IMR-90 (cell line): ENCODE measurements at regions of chr6 and their contacts with region 1.

Region 1: GRCh38 chr6:26031595-26032339 is 55.5 kb upstream of the HFE start:
- DNase-seq: peak; percentile 97
- ATAC-seq: peak; percentile 72
- H3K4me3 ChIP-seq: peak overlapping the region; percentile 73
- H3K27ac ChIP-seq: peak overlapping the region; percentile 27
- H3K4me1 ChIP-seq: no peaks in the 10 kb centered on the region
- H3K27me3 ChIP-seq: no peaks in the 10 kb centered on the region
- CTCF ChIP-seq: peak; percentile 15; the same call in 1 of the 2 replicates
- POLR2A ChIP-seq: peak; percentile 98
- RAD21 ChIP-seq: no peak

Region 2: GRCh38 chr6:26017632-26017966 is 14.2 kb before region 1 on chr6:
- CTCF ChIA-PET with region 1: interaction called, 15 read pairs
- POLR2A ChIA-PET with region 1: interaction called, 17 read pairs
- dilution Hi-C with region 1: no loop called
- in situ Hi-C with region 1: no loop called
- intact Hi-C with region 1: no loop called
- DNase-seq: peak; percentile 95
- ATAC-seq: peak; percentile 34
- H3K4me3 ChIP-seq: peak overlapping the region; percentile 44
- H3K27ac ChIP-seq: peak overlapping the region; percentile 78
- H3K4me1 ChIP-seq: peaks cover 12% of the 10 kb centered on the region
- H3K27me3 ChIP-seq: no peaks in the 10 kb centered on the region
- CTCF ChIP-seq: peak; percentile 72
- POLR2A ChIP-seq: peak; percentile 97
- RAD21 ChIP-seq: no peak

Region 3: DNA sequence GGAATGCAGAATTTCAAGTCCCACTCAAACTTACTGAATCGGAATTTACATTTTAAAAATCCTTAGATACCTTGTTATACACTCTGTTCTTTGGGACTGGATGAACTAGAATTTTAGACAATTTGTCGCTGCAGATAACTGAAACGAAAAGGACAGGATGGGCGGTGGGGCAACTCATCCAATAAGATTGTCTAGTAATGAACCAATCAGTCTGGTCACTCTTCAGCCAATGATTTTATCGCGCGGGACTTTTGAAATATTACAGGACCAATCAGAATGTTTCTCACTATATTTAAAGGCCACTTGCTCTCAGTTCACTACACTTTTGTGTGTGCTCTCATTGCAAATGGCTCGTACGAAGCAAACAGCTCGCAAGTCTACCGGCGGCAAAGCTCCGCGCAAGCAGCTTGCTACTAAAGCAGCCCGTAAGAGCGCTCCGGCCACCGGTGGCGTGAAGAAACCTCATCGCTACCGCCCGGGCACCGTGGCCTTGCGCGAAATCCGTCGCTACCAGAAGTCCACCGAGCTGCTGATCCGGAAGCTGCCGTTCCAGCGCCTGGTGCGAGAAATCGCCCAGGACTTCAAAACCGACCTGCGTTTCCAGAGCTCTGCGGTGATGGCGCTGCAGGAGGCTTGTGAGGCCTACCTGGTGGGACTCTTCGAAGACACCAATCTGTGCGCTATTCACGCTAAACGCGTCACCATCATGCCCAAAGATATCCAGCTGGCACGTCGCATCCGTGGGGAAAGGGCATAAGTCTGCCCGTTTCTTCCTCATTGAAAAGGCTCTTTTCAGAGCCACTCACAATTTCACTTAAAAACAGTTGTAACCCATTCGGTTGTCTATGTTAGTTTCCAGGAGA is 13.5 kb after region 1 on chr6:
- CTCF ChIA-PET with region 1: interaction called, 12 read pairs
- POLR2A ChIA-PET with region 1: interaction called, 20 read pairs
- dilution Hi-C with region 1: no loop called
- in situ Hi-C with region 1: no loop called
- intact Hi-C with region 1: loop called (anchors 1 kb)
- DNase-seq: peak; percentile 94
- ATAC-seq: peak; percentile 73
- H3K4me3 ChIP-seq: peak overlapping the region; percentile 63
- H3K27ac ChIP-seq: peak overlapping the region; percentile 51
- H3K4me1 ChIP-seq: no peaks in the 10 kb centered on the region; the same call in 1 of the 2 replicates
- H3K27me3 ChIP-seq: no peaks in the 10 kb centered on the region
- CTCF ChIP-seq: peak; percentile 21; the same call in 1 of the 2 replicates
- POLR2A ChIP-seq: peak; percentile 98
- RAD21 ChIP-seq: no peak

Region 4: DNA sequence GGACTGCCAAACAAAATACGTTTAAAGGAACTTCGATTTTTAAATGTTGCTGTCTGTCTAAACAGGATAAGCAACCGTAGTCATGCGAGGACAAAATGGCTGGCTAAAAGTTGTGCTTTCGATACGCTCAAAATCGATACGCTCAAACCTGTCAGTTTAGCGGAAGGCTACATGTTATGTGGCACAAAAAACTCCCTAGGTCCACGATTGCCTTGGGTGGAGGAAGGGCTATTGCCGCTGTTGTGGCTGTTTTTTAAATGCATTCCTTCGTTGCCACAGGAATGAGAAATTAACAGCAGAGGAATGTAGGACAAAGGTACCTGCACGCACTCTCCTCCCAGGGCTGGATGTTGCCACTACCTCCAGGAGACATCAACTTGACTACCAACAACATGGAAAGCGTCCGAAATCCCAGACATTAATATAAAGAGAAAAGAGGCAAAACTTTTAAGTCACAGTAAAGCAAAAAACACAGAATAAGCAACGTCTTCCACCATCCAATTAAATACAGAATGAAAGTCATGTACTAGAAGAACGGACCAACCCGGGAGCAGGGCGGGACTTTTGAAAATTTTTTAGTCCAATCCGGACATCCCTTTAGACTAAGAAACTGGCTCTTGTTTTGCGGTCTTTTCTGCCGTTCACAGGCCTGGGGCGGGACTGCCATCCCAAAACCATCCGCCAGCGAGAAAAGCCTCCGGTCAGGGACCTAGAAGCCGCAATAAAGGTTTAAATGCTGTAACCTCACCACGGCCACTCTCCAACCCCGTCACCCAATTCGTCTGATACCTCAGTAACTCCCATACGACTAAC is 23.3 kb after region 1 on chr6:
- CTCF ChIA-PET with region 1: no interaction called
- POLR2A ChIA-PET with region 1: no interaction called
- dilution Hi-C with region 1: no loop called
- in situ Hi-C with region 1: no loop called
- intact Hi-C with region 1: loop called (anchors 1 kb)
- DNase-seq: peak; percentile 96
- ATAC-seq: peak; percentile 77
- H3K4me3 ChIP-seq: peak overlapping the region; percentile 77
- H3K27ac ChIP-seq: peak overlapping the region; percentile 86
- H3K4me1 ChIP-seq: peaks cover 2% of the 10 kb centered on the region; the same call in 1 of the 2 replicates
- H3K27me3 ChIP-seq: no peaks in the 10 kb centered on the region
- CTCF ChIP-seq: peak; percentile 28; the same call in 1 of the 2 replicates
- POLR2A ChIP-seq: peak; percentile 92
- RAD21 ChIP-seq: peak; percentile 26; the same call in 1 of the 2 replicates

Region 5: GRCh38 chr6:26103770-26104456 is 72.1 kb after region 1 on chr6:
- CTCF ChIA-PET with region 1: no interaction called
- POLR2A ChIA-PET with region 1: no interaction called
- dilution Hi-C with region 1: no loop called
- in situ Hi-C with region 1: no loop called
- intact Hi-C with region 1: loop called (anchors 2 kb)
- DNase-seq: peak; percentile 95
- ATAC-seq: peak; percentile 83
- H3K4me3 ChIP-seq: peak overlapping the region; percentile 45
- H3K27ac ChIP-seq: peak overlapping the region; percentile 52
- H3K4me1 ChIP-seq: peaks cover 5% of the 10 kb centered on the region; the same call in 1 of the 2 replicates
- H3K27me3 ChIP-seq: no peaks in the 10 kb centered on the region
- CTCF ChIP-seq: peak; percentile 39
- POLR2A ChIP-seq: peak; percentile 99
- RAD21 ChIP-seq: peak; percentile 44

Region 6: GRCh38 chr6:27132532-27133280 is 1100.9 kb after region 1 on chr6:
- CTCF ChIA-PET with region 1: no interaction called
- POLR2A ChIA-PET with region 1: interaction called, 11 read pairs
- dilution Hi-C with region 1: no loop called
- in situ Hi-C with region 1: loop called (anchors 10 kb)
- intact Hi-C with region 1: no loop called
- DNase-seq: peak; percentile 100
- ATAC-seq: peak; percentile 89
- H3K4me3 ChIP-seq: peak overlapping the region; percentile 50
- H3K27ac ChIP-seq: peak overlapping the region; percentile 79
- H3K4me1 ChIP-seq: no peaks in the 10 kb centered on the region
- H3K27me3 ChIP-seq: no peaks in the 10 kb centered on the region
- CTCF ChIP-seq: no peak
- POLR2A ChIP-seq: peak; percentile 99
- RAD21 ChIP-seq: no peak

Region 7: DNA sequence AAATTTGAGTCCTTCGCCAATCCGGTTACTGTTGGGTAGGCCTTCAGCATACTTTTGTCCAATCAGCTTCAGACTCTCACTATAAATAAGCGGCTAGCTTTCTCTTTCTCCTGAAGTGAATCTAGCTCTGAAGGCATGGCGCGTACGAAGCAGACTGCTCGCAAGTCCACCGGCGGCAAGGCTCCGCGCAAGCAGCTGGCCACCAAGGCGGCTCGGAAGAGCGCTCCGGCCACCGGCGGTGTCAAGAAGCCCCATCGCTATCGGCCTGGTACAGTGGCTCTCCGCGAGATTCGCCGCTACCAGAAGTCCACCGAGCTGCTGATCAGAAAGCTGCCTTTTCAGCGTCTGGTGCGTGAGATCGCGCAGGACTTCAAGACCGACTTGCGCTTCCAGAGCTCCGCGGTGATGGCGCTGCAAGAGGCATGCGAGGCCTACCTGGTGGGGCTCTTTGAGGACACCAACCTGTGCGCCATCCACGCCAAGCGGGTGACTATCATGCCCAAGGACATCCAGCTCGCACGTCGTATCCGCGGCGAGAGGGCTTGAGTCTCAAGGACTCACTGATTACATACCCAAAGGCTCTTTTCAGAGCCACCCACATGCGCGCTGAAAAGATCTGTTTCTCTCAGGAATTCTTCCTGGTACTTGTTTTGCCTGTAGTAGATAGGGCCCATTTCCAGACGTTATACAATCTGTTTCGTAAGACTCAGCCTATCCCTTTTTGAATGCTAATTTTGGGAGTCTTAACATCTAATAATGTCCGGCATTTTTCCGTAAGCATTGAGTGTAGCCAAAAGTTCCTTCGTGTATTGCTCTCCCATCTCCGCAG is 1778.4 kb after region 1 on chr6:
- CTCF ChIA-PET with region 1: no interaction called
- POLR2A ChIA-PET with region 1: interaction called, 3 read pairs
- dilution Hi-C with region 1: no loop called
- in situ Hi-C with region 1: loop called (anchors 10 kb)
- intact Hi-C with region 1: no loop called
- DNase-seq: peak; percentile 98
- ATAC-seq: peak; percentile 52
- H3K4me3 ChIP-seq: peak overlapping the region; percentile 58
- H3K27ac ChIP-seq: peak overlapping the region; percentile 87
- H3K4me1 ChIP-seq: peaks cover 3% of the 10 kb centered on the region
- H3K27me3 ChIP-seq: no peaks in the 10 kb centered on the region
- CTCF ChIP-seq: 0 out of 2 replicates have a peak, but pooled peaks have one; percentile 16
- POLR2A ChIP-seq: peak; percentile 99
- RAD21 ChIP-seq: no peak